Cardiac septum (tissue), 1 donor: ENCODE measurements at regions of chr15 and their contacts with region 1.

Region 1: GRCh38 chr15:24772686-24773373 is 97.3 kb downstream of the NPAP1 start:
- DNase-seq: peak; percentile 78

Region 2: DNA sequence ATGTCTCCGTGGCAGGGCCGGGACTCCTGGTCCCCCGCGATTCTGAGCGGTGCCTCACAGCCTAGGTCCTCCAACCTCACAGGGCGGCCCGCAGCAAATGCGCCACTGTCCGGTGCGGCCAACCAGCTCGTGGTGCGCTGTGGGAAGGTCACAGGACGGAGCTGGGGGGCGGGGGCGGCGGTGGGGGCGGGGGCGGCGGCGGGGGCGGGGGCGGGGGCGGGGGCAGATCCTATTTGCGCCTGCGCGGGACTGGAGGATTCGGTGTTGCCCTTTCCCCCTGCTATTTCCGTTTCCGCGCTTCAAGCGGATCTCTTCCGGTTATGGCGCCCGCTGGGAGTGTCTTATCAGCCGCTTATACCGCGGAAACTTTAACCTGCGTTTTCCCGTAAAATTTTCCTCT is 75.2 kb after region 1 on chr15:
- intact Hi-C with region 1: loop called (anchors 10 kb)
- DNase-seq: no peak